ENCODE measurements at regions of chr2 and their contacts with region 1.

Region 1: DNA sequence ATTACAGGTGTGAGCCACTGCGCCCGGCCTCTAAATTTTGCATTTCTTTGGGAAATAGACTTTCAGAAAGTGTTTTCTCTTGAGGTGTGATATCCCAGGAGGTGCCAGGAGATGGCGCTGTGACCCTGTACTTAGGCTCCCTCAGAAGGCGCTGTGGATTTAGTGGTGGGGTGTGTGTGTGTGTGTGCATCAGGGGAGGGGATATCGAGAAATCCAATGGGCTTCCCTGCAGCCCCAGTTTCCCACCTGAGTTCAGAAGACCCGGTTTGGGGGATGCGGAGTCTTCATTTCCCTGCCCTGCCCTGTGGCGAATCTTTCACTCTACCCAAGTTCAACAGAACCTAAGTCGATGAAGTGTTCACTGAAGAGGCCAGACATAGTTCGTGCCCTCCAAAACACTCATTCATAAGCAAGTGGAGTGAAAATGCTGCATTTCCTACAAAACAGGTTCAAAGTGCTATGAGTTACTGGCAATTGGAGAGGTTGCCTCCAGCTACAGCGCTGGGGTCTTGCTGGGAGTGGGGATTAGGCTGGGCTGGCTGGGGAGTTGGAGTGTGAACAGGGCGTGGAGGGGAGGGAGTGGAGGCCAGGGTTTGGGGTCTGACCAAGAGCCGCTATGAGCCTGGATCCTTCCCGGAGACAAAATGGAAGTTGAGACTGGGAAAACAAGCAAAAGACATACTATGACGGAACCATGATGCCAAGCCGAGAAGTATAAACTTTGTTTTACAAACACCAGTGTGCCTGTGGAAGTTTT is 6.5 kb upstream of the WNT6 start:
- DNase-seq: peak; percentile 77
- H3K4me3 ChIP-seq: no peak overlapping the region
- H3K27ac ChIP-seq: no peak overlapping the region
- H3K4me1 ChIP-seq: peaks cover 5% of the 10 kb centered on the region
- H3K27me3 ChIP-seq: peaks cover 2% of the 10 kb centered on the region
- CTCF ChIP-seq: peak; percentile 82

Region 2: DNA sequence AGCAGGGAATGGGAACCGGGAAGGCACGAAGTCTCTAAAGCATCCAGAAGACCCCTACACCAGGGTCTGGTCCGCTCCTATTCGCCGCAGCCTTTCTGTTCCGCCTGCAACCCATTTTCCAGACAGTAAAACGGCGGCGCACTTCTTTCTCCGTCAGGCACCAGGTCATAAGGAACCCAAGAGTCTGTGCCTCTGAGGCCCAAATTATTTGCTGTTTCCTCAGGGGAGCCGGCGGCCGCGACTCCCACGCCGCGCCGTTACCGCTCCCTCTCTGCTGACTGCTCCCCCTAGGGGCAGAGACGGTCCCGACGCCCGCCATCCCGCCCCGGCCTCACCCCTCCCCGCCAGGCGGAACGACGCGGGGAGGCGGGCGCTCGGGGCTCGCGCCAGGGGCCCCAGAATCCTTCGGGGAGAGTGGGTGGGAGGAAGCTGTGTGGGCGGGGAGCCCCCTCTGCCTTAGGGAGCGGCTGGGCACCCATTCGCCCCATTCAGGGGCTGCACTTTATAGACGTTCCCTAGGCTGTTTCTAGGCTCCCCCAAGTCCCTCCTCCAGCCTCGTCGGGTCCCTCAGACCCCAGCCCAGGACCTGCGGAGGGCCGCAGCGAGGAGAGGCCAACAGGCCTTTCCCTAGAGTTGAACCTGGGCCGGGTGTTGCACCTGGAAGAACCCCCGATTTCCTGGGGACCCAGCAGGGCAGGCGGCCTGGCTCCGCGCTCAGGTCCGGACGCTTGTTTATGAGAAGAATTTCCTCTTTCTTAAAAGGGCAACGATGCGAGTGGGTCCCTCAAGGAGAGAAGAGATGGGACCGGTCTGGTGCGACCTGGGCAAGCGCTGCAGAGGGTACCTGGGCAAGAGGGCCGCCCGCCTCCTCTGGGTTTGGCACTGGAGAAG is 457.0 kb before region 1 on chr2:
- CTCF ChIA-PET with region 1: no interaction called
- POLR2A ChIA-PET with region 1: no interaction called
- intact Hi-C with region 1: loop called (anchors 5 kb)
- DNase-seq: peak; percentile 98
- H3K4me3 ChIP-seq: peak overlapping the region; percentile 97
- H3K27ac ChIP-seq: peak overlapping the region; percentile 91
- H3K4me1 ChIP-seq: peaks cover 37% of the 10 kb centered on the region
- H3K27me3 ChIP-seq: no peaks in the 10 kb centered on the region
- CTCF ChIP-seq: peak; percentile 87

Region 3: GRCh38 chr2:218898109-218898878 is 45.2 kb after region 1 on chr2:
- CTCF ChIA-PET with region 1: interaction called, 9 read pairs
- POLR2A ChIA-PET with region 1: no interaction called
- intact Hi-C with region 1: loop called (anchors 2 kb)
- DNase-seq: peak; percentile 73
- H3K4me3 ChIP-seq: no peak overlapping the region
- H3K27ac ChIP-seq: no peak overlapping the region
- H3K4me1 ChIP-seq: peaks cover 22% of the 10 kb centered on the region
- H3K27me3 ChIP-seq: peaks cover 38% of the 10 kb centered on the region
- CTCF ChIP-seq: peak; percentile 98

Region 4: GRCh38 chr2:219155054-219155644 is 302.1 kb after region 1 on chr2:
- CTCF ChIA-PET with region 1: interaction called, 4 read pairs
- POLR2A ChIA-PET with region 1: no interaction called
- intact Hi-C with region 1: loop called (anchors 10 kb)
- DNase-seq: peak; percentile 91
- H3K4me3 ChIP-seq: no peak overlapping the region
- H3K27ac ChIP-seq: no peak overlapping the region
- H3K4me1 ChIP-seq: peaks cover 4% of the 10 kb centered on the region
- H3K27me3 ChIP-seq: no peaks in the 10 kb centered on the region
- CTCF ChIP-seq: peak; percentile 56